Calu3 (cell line): ENCODE measurements at regions of chr22 and their contacts with region 1.

Region 1: DNA sequence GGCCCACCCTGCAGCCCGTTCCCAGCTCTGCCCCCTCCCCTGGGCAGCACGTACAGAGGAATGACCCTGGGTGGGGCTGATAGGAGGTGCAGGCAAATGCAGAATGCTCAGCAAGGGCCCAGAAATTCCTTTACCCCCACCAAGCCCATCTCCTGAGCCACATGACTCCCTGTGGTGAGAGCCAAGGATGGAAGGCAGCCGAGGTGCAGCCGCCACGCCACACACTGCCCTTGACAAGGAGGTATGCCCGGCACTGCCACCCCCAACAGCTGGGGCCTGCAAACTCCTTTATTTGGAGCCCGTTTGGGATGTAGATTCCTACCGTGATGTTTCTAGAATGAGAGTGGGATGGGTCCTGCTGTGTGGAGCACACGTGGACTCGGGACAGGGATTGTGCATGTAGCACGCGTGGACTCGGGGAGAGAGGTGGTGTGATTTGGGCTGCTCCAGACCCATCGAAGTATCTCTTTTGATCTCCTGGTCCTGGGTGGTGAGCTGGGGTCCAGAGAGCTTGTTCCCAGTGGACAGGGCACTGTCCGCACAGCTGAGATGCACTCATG is 12.9 kb downstream of the GTSE1 start:
- DNase-seq: no peak
- H3K4me3 Mint-ChIP-seq: no peak overlapping the region
- H3K27ac Mint-ChIP-seq: no peak overlapping the region
- H3K4me1 Mint-ChIP-seq: peaks cover 8% of the 10 kb centered on the region
- H3K27me3 Mint-ChIP-seq: no peaks in the 10 kb centered on the region
- CTCF ChIP-seq: no peak

Region 2: GRCh38 chr22:45994491-45995404 is 314.9 kb before region 1 on chr22:
- CTCF ChIA-PET with region 1: no interaction called
- intact Hi-C with region 1: loop called (anchors 10 kb)
- DNase-seq: peak; percentile 91
- H3K4me3 Mint-ChIP-seq: no peak overlapping the region
- H3K27ac Mint-ChIP-seq: no peak overlapping the region
- H3K4me1 Mint-ChIP-seq: no peaks in the 10 kb centered on the region
- H3K27me3 Mint-ChIP-seq: peaks cover 56% of the 10 kb centered on the region
- CTCF ChIP-seq: peak; percentile 93

Region 3: GRCh38 chr22:46415776-46416519 is 106.3 kb after region 1 on chr22:
- CTCF ChIA-PET with region 1: no interaction called
- intact Hi-C with region 1: no loop called
- DNase-seq: no peak
- H3K4me3 Mint-ChIP-seq: no peak overlapping the region
- H3K27ac Mint-ChIP-seq: no peak overlapping the region
- H3K4me1 Mint-ChIP-seq: no peaks in the 10 kb centered on the region
- H3K27me3 Mint-ChIP-seq: no peaks in the 10 kb centered on the region
- CTCF ChIP-seq: no peak